HepG2 (cell line): ENCODE measurements at regions of chr2 and their contacts with region 1.

Region 1: GRCh38 chr2:200963124-200963917 is at the start of gene ORC2:
- DNase-seq: peak; percentile 96
- ATAC-seq: peak; percentile 96
- H3K4me3 ChIP-seq: peak within 1 kb of the TSS; percentile 79 to 96 (median 86)
- H3K27ac ChIP-seq: peak within 1 kb of the TSS; percentile 85
- H3K4me1 ChIP-seq: peaks cover 52% of the 10 kb centered on the region
- H3K27me3 ChIP-seq: no peaks in the 10 kb centered on the region; a peak in 1 of 5 replicates
- CTCF ChIP-seq: peak; percentile 92
- EP300 ChIP-seq: peak in 1 of 2 experiments; percentile 30; a peak in 2 of 4 replicates
- POLR2A ChIP-seq: peak; percentile 74 to 85
- RAD21 ChIP-seq: peak; percentile 77
- total RNA-seq, gene ORC2: 58.3 and 73.5 TPM in 2 replicates

Region 2: DNA sequence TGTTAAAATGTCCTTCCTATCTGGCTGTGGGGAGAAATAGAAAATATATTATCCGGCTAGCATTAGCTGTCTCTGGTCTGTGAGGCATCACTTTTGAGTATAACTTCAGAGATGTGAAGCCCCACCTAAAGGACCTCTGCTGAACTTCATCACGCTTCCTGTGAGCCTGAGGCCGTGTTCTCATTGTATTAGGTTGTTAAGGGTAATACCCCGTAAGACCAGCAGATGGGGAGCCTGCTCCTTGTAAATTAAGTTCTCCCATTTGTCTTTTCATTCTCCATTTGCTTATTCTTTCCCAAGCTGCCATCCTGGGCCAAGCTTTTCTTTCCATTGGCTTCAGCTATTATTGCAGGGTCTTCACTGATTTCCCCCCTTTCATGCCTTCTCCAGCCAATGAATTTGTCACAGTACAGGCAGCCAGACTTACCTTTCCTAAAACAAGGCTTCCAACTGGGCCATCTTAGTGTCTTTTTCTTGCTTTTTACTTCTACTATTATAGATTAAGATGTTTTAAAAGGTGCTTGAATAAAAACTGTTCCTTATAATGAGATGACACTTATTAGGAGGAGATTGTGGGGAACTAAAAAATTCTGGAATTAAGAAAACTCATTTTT is 61.8 kb before region 1 on chr2:
- CTCF ChIA-PET with region 1: interaction called, 3 read pairs
- POLR2A ChIA-PET with region 1: interaction called, 4 read pairs
- in situ Hi-C with region 1: no loop called
- intact Hi-C with region 1: loop called (anchors 5 kb)
- DNase-seq: peak; percentile 94
- ATAC-seq: peak; percentile 97
- H3K4me3 ChIP-seq: no peak overlapping the region
- H3K27ac ChIP-seq: no peak overlapping the region
- H3K4me1 ChIP-seq: no peaks in the 10 kb centered on the region
- H3K27me3 ChIP-seq: no peaks in the 10 kb centered on the region
- CTCF ChIP-seq: peak; percentile 92
- EP300 ChIP-seq: no peak
- POLR2A ChIP-seq: no peak
- RAD21 ChIP-seq: peak; percentile 87

Region 3: DNA sequence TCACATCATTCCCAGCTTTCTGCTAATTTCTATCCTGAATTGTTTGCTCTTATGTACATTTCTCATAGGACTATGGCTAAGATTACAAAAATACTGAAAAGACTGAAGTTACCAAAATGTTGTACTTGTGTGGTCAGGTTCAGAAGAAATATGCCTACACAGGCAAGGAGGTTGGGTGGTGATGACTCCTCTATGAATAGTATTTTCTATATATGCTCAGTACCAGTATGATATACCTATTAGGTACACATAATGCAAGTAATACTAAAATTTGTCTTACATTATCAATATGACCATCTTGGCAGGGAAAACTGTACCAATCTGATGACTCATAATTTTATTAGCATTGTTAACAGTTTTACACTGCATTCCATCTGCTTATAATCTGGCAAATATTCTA is 12.4 kb after region 1 on chr2:
- CTCF ChIA-PET with region 1: no interaction called
- POLR2A ChIA-PET with region 1: interaction called, 37 read pairs
- in situ Hi-C with region 1: no loop called
- intact Hi-C with region 1: no loop called
- DNase-seq: no peak
- ATAC-seq: no peak
- H3K4me3 ChIP-seq: no peak overlapping the region
- H3K27ac ChIP-seq: no peak overlapping the region
- H3K4me1 ChIP-seq: no peaks in the 10 kb centered on the region
- H3K27me3 ChIP-seq: no peaks in the 10 kb centered on the region
- CTCF ChIP-seq: no peak
- EP300 ChIP-seq: no peak
- POLR2A ChIP-seq: no peak
- RAD21 ChIP-seq: no peak

Region 4: GRCh38 chr2:201040867-201041628 is 77.7 kb after region 1 on chr2:
- CTCF ChIA-PET with region 1: no interaction called
- POLR2A ChIA-PET with region 1: interaction called, 13 read pairs
- in situ Hi-C with region 1: no loop called
- intact Hi-C with region 1: no loop called
- DNase-seq: peak; percentile 75
- ATAC-seq: peak; percentile 79
- H3K4me3 ChIP-seq: no peak overlapping the region
- H3K27ac ChIP-seq: peak overlapping the region; percentile 41
- H3K4me1 ChIP-seq: peaks cover 36% of the 10 kb centered on the region
- H3K27me3 ChIP-seq: no peaks in the 10 kb centered on the region
- CTCF ChIP-seq: no peak
- EP300 ChIP-seq: peak in 1 of 2 experiments; percentile 69; a peak in 1 of 4 replicates
- POLR2A ChIP-seq: no peak
- RAD21 ChIP-seq: no peak

Region 5: GRCh38 chr2:201071479-201072200 is 108.3 kb after region 1 on chr2 and contains the starts of genes HYCC2 and NDUFB3:
- CTCF ChIA-PET with region 1: interaction called, 7 read pairs
- POLR2A ChIA-PET with region 1: interaction called, 42 read pairs
- in situ Hi-C with region 1: loop called (anchors 5 kb)
- intact Hi-C with region 1: loop called (anchors 1 kb)
- DNase-seq: peak; percentile 95
- ATAC-seq: peak; percentile 98
- H3K4me3 ChIP-seq: peak within 1 kb of the TSS; percentile 77 to 91 (median 91)
- H3K27ac ChIP-seq: peak within 1 kb of the TSS; percentile 88
- H3K4me1 ChIP-seq: peaks cover 34% of the 10 kb centered on the region
- H3K27me3 ChIP-seq: no peaks in the 10 kb centered on the region; a peak in 1 of 5 replicates
- CTCF ChIP-seq: peak; percentile 82
- EP300 ChIP-seq: no peak; a peak in 3 of 4 replicates
- POLR2A ChIP-seq: peak; percentile 65 to 71
- RAD21 ChIP-seq: peak; percentile 51
- total RNA-seq, gene HYCC2: 13.9 and 21.5 TPM in 2 replicates
- total RNA-seq, gene NDUFB3: 159 and 209 TPM in 2 replicates

Region 6: DNA sequence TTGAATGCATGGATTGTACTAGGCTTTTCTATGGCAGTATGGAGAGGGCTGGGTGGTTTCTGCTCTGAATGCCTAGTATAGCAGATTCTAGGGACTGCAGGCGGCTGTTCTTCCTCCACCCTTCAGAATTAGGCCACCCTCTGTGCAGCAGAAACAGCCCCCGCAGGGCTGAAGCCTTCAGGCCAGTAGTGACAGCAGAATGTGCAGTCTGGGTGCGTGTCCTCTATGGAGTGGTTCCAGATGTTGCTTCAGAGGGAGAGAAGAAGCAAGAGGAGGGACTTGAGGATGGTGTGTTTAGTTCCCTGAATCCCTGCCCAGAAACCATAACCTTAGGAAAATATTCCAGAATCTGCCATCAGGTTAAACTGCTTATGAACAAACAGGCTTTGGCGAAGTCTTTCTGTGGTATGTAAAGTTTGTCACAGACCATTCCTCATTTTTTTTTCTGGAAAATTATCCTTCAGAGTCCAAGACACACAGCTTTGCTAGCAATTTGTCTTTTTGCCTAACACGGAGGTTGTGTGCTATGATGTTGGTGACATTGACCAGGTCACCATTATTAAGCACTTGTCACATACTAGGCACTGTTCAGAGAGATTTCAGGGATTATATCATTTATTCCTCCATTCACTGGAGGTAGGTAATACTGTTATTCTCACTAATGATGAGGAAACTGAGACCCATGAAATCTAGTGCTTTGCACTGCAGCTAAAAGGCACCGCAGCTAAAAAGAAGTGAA is 240.8 kb after region 1 on chr2:
- CTCF ChIA-PET with region 1: no interaction called
- POLR2A ChIA-PET with region 1: interaction called, 12 read pairs
- in situ Hi-C with region 1: no loop called
- intact Hi-C with region 1: no loop called
- DNase-seq: no peak
- ATAC-seq: peak; percentile 28
- H3K4me3 ChIP-seq: peak overlapping the region; percentile 11 to 53 (median 12); a peak in 4 of 6 replicates
- H3K27ac ChIP-seq: peak overlapping the region; percentile 97
- H3K4me1 ChIP-seq: peaks cover 52% of the 10 kb centered on the region
- H3K27me3 ChIP-seq: no peaks in the 10 kb centered on the region
- CTCF ChIP-seq: no peak
- EP300 ChIP-seq: no peak
- POLR2A ChIP-seq: no peak; a peak in 1 of 4 replicates
- RAD21 ChIP-seq: no peak